SK-N-SH (cell line): ENCODE measurements at regions of chr11 and their contacts with region 1.

Region 1: DNA sequence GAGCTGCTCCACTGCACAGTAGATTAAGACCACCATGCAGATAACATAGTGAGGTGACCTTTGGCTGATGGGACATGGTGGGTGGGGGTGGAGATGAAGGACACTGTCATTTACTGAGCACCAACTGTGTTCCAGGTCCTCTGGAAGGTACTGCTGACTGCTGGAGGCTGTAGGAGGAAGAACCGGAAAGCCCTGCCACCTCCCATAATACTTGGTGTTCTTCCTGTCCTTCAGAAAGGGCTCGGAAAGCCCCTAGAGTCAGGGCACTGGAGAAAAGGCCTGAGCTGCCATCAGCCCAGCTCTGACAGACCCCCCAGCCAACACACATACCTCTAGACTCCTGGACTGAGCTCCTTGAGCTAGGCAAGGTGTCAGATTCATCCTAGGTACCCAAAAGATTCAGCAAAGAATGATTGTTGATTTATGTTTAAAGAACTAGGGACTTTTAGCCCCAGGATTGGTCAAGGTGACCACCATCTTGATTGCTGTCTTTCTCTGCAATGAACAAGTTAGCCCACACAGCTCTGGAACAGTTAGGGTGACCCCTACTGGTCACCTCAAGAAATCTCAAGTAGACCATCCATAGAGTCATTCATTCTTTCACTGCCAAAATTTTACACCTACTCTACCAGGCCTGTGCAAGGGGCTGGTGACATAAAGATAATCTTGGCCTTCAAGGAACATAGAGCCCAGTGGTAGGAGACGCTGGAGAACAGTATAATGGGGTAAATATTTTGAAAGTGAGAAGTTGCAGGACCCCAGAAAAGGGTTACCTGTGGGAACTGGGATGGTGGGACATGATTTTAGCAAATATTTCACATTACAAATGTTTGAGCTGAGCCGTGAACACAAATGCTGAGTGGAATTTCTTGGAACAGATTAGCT is 39.4 kb downstream of the IRAG1 start:
- DNase-seq: peak; percentile 66
- H3K4me3 ChIP-seq: no peak overlapping the region; a peak in 1 of 4 replicates
- H3K27ac ChIP-seq: no peak overlapping the region
- H3K4me1 ChIP-seq: peaks cover 0 to 31% of the 10 kb centered on the region in 2 experiments; a peak in 3 of 4 replicates
- H3K27me3 ChIP-seq: no peaks in the 10 kb centered on the region
- CTCF ChIP-seq: peak; percentile 82
- EP300 ChIP-seq: no peak
- RAD21 ChIP-seq: peak; percentile 82

Region 2: DNA sequence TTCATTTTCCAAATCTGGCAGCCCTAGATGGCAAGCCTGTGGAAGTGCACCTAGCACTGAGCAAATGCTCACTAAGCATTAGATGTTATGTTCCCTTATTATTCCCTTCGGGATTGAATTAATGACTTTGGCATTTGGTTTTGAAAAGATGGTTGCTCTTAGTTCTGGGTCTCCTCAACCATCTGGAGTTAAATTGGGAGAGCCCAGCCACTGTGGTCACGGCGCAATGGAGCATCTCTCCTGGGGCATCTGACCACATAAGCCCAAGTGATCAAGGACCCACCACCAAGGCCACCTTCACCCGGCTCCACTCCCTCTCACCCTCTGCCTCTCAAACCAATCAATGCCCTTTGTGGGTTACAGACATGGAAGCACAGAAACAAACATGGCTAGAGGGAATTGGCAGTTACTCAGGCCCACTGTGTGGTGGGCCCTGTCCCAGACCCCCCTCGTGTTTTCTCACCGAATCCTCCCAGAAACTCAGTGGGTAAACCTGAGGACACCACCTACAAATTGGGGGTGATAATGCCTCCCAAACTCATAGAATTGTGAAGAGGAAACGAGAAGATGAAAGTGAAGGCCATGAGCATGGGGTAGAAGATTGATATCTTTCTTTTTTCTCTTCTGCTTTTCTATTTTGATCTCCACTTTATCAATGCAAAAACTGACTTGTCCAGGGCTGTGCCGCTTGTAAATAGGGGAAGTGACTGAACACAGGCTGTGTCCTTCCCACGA is 12.8 kb before region 1 on chr11:
- CTCF ChIA-PET with region 1: interaction called, 11 read pairs
- POLR2A ChIA-PET with region 1: no interaction called
- DNase-seq: no peak
- H3K4me3 ChIP-seq: no peak overlapping the region
- H3K27ac ChIP-seq: no peak overlapping the region
- H3K4me1 ChIP-seq: no peaks in the 10 kb centered on the region; a peak in 1 of 4 replicates
- H3K27me3 ChIP-seq: no peaks in the 10 kb centered on the region
- CTCF ChIP-seq: no peak
- EP300 ChIP-seq: no peak
- RAD21 ChIP-seq: no peak

Region 3: GRCh38 chr11:10666556-10667523 is 12.7 kb after region 1 on chr11:
- CTCF ChIA-PET with region 1: interaction called, 31 read pairs
- POLR2A ChIA-PET with region 1: no interaction called
- DNase-seq: no peak
- H3K4me3 ChIP-seq: no peak overlapping the region
- H3K27ac ChIP-seq: no peak overlapping the region
- H3K4me1 ChIP-seq: peaks cover 12 to 18% of the 10 kb centered on the region in 2 experiments
- H3K27me3 ChIP-seq: no peaks in the 10 kb centered on the region
- CTCF ChIP-seq: no peak
- EP300 ChIP-seq: no peak
- RAD21 ChIP-seq: no peak